ENCODE measurements at regions of chr2 and their contacts with region 1.

Region 1: GRCh38 chr2:237691908-237692600 is 64.7 kb downstream of the LRRFIP1 start:
- DNase-seq: peak; percentile 91
- H3K4me3 Mint-ChIP-seq: peak overlapping the region; percentile 83
- H3K27ac Mint-ChIP-seq: peak overlapping the region; percentile 98
- H3K4me1 Mint-ChIP-seq: peaks cover 51% of the 10 kb centered on the region
- H3K27me3 Mint-ChIP-seq: no peaks in the 10 kb centered on the region
- CTCF ChIP-seq: no peak

Region 2: GRCh38 chr2:237085248-237086221 is 606.5 kb before region 1 on chr2 and contains the start of gene COPS8:
- CTCF ChIA-PET with region 1: no interaction called
- POLR2A ChIA-PET with region 1: interaction called, 14 read pairs
- intact Hi-C with region 1: no loop called
- DNase-seq: peak; percentile 93
- H3K4me3 Mint-ChIP-seq: peak within 1 kb of the TSS; percentile 99
- H3K27ac Mint-ChIP-seq: peak within 1 kb of the TSS; percentile 94
- H3K4me1 Mint-ChIP-seq: peaks cover 8% of the 10 kb centered on the region
- H3K27me3 Mint-ChIP-seq: no peaks in the 10 kb centered on the region
- CTCF ChIP-seq: peak; percentile 21
- total RNA-seq, gene COPS8: 249 and 274 TPM in 2 replicates

Region 3: DNA sequence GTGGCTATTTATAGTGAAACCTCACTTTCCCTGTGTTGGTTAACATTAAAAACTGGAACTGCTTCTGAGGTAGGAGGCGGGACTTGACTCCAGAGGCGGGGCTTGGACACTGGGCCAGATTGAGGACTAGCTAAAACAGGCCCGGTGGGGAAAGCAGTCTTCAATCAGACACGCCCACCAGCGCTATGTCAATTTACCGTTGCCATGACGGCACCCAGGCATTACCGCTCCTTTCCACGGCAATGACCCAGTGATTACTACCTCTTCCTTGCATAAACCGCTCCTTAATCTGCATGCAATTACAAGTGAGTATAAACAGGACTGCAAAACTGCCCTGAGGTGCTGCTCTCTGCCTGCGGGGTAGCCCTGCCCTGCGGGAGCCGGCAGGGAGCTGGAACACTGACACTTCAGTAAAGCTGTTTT is 29.4 kb before region 1 on chr2:
- CTCF ChIA-PET with region 1: interaction called, 3 read pairs
- POLR2A ChIA-PET with region 1: interaction called, 20 read pairs
- intact Hi-C with region 1: no loop called
- DNase-seq: peak; percentile 93
- H3K4me3 Mint-ChIP-seq: peak overlapping the region; percentile 26
- H3K27ac Mint-ChIP-seq: peak overlapping the region; percentile 71
- H3K4me1 Mint-ChIP-seq: peaks cover 12% of the 10 kb centered on the region
- H3K27me3 Mint-ChIP-seq: peaks cover 15% of the 10 kb centered on the region
- CTCF ChIP-seq: no peak

Region 4: DNA sequence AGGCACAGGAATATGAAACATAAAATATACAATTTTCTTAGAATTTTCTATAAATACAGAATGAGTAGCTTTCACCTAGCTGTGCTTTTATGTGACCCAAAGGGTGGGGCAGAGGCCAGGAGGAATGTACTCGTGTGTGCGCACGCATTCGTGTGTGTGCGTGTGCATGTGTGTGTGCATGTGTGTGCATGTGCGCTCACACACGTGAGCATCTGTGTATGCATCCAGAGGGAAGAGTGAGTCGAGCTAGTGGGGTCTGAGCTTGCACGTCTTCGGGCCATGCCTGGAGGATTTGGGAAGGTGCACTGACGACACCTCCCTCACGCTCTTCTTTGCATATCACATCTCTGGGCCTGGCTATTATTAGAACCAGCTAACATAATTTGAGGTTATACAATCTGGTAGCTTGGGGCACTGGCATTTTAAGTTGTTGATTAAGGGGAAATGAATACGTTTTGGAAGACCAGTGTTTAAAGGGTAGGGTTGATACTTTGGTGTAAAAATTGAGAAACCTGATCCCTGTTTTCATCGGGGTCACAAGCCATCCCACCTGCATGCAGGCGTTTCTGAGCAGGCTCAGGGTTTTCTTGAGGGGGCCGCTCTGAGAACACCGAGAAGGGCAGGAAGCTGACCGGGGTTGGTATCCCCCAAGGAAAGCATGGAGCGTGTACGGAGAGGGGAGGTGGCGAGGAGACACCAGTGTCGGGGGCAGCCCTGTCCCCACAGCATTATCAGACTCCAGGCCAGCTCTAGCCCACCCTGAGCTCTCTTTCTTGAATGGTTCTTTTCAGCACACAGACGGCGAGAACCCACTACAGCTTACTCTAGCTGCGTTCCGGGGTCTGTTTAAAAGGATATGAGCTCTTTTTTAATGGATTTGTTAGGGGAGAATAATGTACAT is 20.7 kb after region 1 on chr2:
- CTCF ChIA-PET with region 1: interaction called, 4 read pairs
- POLR2A ChIA-PET with region 1: interaction called, 11 read pairs
- intact Hi-C with region 1: no loop called
- DNase-seq: no peak
- H3K4me3 Mint-ChIP-seq: no peak overlapping the region
- H3K27ac Mint-ChIP-seq: peak overlapping the region; percentile 22
- H3K4me1 Mint-ChIP-seq: peaks cover 5% of the 10 kb centered on the region
- H3K27me3 Mint-ChIP-seq: no peaks in the 10 kb centered on the region
- CTCF ChIP-seq: no peak

Region 5: DNA sequence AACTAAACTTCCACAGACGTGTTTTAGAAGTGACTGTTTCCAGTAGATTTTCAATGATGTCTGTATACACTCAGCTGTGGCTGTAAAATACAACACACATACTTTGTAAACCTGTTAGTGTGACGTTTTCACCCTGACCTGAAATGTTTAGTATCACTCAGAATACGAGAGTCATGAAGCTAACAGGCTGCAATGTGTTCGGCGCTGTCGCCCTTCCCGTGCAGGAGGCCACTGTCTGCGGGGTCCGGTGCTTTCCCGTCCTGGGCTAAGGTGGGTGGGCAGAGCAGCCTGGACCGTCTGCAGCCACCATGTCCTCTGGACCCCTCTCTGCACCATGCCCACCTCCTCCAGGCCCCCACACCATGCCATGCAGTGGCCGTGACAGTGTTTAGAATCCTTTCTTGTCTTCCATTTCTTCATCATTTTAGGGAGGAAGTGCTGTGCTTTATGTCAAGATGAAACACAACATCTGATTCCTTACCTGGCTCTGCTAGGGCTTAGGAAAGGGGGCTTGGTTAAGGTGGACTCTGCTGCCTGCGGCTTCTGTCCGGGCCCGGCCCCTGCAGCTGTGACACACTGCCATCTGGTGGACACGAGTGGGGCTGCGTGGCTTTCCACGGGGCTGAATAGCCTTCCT is 52.7 kb after region 1 on chr2:
- CTCF ChIA-PET with region 1: interaction called, 34 read pairs
- POLR2A ChIA-PET with region 1: interaction called, 8 read pairs
- intact Hi-C with region 1: no loop called
- DNase-seq: peak; percentile 55
- H3K4me3 Mint-ChIP-seq: no peak overlapping the region
- H3K27ac Mint-ChIP-seq: peak overlapping the region; percentile 33
- H3K4me1 Mint-ChIP-seq: peaks cover 19% of the 10 kb centered on the region
- H3K27me3 Mint-ChIP-seq: no peaks in the 10 kb centered on the region
- CTCF ChIP-seq: peak; percentile 92

Measured in MCF 10A (cell line).